ENCODE measurements at regions of chr9 and their contacts with region 1.

Region 1: GRCh38 chr9:4984621-4985385 is at the start of gene JAK2:
- DNase-seq: peak; percentile 90 to 93
- ATAC-seq: peak; percentile 93 to 98 (median 96)
- H3K4me3 ChIP-seq: peak within 1 kb of the TSS; percentile 70 to 95 (median 84)
- H3K27ac ChIP-seq: peak within 1 kb of the TSS; percentile 92 to 99 (median 98)
- H3K4me1 ChIP-seq: peaks cover 0 to 70% (median 38%) of the 10 kb centered on the region in 9 donors
- H3K27me3 ChIP-seq: no peaks in the 10 kb centered on the region
- CTCF ChIP-seq: peak in 8 of 9 donors; percentile 17 to 79 (median 52)
- total RNA-seq, gene JAK2: 7.0 to 95.6 (median 44.8) TPM

Region 2: GRCh38 chr9:4679268-4680172 is 305.3 kb before region 1 on chr9 and contains the start of gene CDC37L1:
- intact Hi-C with region 1: loop called in 1 of 10 experiments (anchors 10 kb)
- DNase-seq: peak; percentile 99
- ATAC-seq: peak; percentile 99 to 100 (median 99)
- H3K4me3 ChIP-seq: peak within 1 kb of the TSS; percentile 67 to 96 (median 78)
- H3K27ac ChIP-seq: peak within 1 kb of the TSS; percentile 91 to 100 (median 96)
- H3K4me1 ChIP-seq: peaks cover 0 to 40% (median 26%) of the 10 kb centered on the region in 9 donors
- H3K27me3 ChIP-seq: no peaks in the 10 kb centered on the region
- CTCF ChIP-seq: peak; percentile 49 to 81 (median 72)
- total RNA-seq, gene CDC37L1: 29.8 to 58.4 (median 36.6) TPM

Region 3: GRCh38 chr9:4762108-4762885 is 222.5 kb before region 1 on chr9:
- intact Hi-C with region 1: loop called (anchors 1 to 5 kb)
- DNase-seq: peak; percentile 51 to 74
- ATAC-seq: peak in 7 of 8 donors; percentile 38 to 75 (median 66)
- H3K4me3 ChIP-seq: peak overlapping the region in 8 of 10 donors; percentile 10 to 41 (median 33)
- H3K27ac ChIP-seq: peak overlapping the region in 7 of 10 donors; percentile 11 to 87 (median 37)
- H3K4me1 ChIP-seq: peaks cover 0 to 47% (median 12%) of the 10 kb centered on the region in 9 donors
- H3K27me3 ChIP-seq: no peaks in the 10 kb centered on the region
- CTCF ChIP-seq: peak; percentile 53 to 90 (median 80)

Region 4: GRCh38 chr9:4849364-4849763 is 135.4 kb before region 1 on chr9:
- intact Hi-C with region 1: loop called in 2 of 10 experiments (anchors 10 kb)
- DNase-seq: no peak
- ATAC-seq: no peak
- H3K4me3 ChIP-seq: no peak overlapping the region
- H3K27ac ChIP-seq: no peak overlapping the region
- H3K4me1 ChIP-seq: peaks cover 0 to 5% (median 0%) of the 10 kb centered on the region in 9 donors
- H3K27me3 ChIP-seq: no peaks in the 10 kb centered on the region
- CTCF ChIP-seq: peak in 4 of 9 donors; percentile 7 to 27 (median 24)

Region 5: GRCh38 chr9:4939118-4939561 is 45.7 kb before region 1 on chr9:
- intact Hi-C with region 1: loop called in 4 of 10 experiments (anchors 5 to 10 kb)
- DNase-seq: no peak
- ATAC-seq: peak; percentile 25 to 71 (median 51)
- H3K4me3 ChIP-seq: no peak overlapping the region
- H3K27ac ChIP-seq: peak overlapping the region in 1 of 10 donors; percentile 76
- H3K4me1 ChIP-seq: peaks cover 0 to 79% (median 46%) of the 10 kb centered on the region in 9 donors
- H3K27me3 ChIP-seq: no peaks in the 10 kb centered on the region
- CTCF ChIP-seq: no peak

Region 6: GRCh38 chr9:5437254-5438216 is 452.7 kb after region 1 on chr9 and contains the start of gene PLGRKT:
- intact Hi-C with region 1: loop called in 2 of 10 experiments (anchors 5 to 10 kb)
- DNase-seq: peak; percentile 95
- ATAC-seq: peak; percentile 99
- H3K4me3 ChIP-seq: peak within 1 kb of the TSS; percentile 39 to 87 (median 67)
- H3K27ac ChIP-seq: peak within 1 kb of the TSS; percentile 41 to 97 (median 92)
- H3K4me1 ChIP-seq: peaks cover 0 to 26% (median 22%) of the 10 kb centered on the region in 9 donors
- H3K27me3 ChIP-seq: no peaks in the 10 kb centered on the region
- CTCF ChIP-seq: peak in 6 of 9 donors; percentile 10 to 53 (median 33)
- total RNA-seq, gene PLGRKT: 30.1 to 53.0 (median 36.3) TPM

Region 7: DNA sequence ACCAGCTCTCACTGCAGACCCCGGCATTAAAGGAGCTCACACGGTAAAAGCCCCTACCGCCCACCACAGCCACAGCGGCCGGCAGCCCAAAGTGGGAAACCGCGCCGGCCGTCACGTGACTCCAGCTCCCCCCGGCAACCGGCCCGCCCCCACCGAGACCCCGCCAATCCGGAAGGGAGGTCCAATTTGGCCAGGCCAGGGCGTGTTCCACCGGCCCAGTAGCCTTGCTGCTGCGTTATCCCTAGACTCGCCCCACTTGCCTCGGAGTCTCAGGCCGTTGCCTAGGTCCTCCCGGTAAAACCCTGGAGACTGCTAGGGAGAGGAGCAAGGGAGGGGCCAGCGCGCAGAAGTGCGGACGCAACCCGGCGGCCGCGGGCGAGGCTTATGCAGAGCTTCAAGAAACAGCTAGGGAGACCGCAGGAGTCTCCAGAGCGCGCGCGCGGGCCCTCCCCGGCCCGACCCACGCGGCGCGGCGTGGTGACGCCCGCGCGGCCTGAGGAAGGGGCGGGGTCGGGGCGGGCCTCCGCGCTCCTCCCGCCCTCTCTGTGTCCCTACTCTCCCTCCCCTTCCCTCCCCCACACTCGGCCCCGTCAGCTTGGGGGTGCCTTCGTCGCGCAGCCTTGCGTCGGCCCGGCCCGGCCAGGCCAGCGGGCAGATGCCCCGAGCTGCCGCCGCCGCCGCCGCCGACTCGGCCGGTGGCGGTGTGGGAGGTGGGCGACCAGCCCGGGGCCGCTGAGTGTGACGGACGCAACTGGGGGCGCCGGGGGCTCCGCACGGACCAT is 643.9 kb after region 1 on chr9 and contains the start of gene RIC1:
- intact Hi-C with region 1: loop called in 1 of 10 experiments (anchors 5 kb)
- DNase-seq: peak; percentile 92 to 93
- ATAC-seq: peak; percentile 93 to 98 (median 96)
- H3K4me3 ChIP-seq: peak within 1 kb of the TSS; percentile 89 to 100 (median 94)
- H3K27ac ChIP-seq: peak within 1 kb of the TSS; percentile 94 to 100 (median 97)
- H3K4me1 ChIP-seq: peaks cover 0 to 77% (median 47%) of the 10 kb centered on the region in 9 donors
- H3K27me3 ChIP-seq: no peaks in the 10 kb centered on the region
- CTCF ChIP-seq: peak in 5 of 9 donors; percentile 5 to 26 (median 22)
- total RNA-seq, gene RIC1: 7.8 to 13.8 (median 8.5) TPM